Left lung (tissue), 14 donors: ENCODE measurements at regions of chr4 and their contacts with region 1.

Region 1: DNA sequence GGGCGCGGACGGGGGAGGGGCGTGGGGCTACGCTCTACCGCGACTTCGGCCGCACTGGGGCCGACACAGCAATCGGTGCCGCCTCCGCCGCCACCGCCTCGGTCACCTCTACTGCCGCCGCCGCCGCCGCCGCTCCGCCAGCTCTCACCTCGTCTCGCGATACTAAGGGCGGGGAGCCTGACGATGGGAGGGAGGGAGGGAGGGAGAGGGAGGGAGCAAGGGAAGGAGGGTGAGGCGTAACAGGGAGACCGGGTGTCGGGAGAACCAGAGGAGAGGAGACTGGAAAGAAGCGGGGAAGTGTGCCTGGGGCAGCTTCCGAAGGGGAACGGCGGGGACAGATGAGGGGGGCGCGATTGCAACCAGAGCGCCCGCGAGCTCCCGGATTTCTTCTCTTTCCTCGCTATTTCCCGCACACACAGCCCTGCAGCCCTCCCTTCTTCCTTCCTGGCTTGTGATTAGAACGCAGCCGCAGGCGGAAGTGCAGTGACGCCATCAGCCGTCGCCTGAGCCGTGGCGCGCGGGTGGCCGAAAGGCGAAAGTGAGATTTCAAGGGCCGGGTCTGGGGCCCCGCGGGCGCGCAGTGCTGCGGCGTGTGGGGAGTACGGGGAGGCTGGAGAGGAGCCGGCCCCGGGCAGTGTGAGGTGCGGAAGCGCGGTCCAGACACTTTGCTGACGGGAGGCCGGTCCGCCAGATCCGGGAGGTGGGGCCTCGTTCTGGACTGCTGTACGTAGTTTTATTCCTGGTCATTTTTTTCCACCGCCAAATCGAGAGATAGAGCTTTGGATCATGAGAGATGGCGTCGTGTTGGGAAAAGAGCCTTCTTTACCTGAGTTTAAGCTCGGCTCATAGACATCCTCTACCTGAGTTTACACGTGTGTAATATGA is at the start of gene ANKRD17:
- DNase-seq: peak; percentile 93 to 98 (median 97)
- ATAC-seq: peak; percentile 87
- H3K4me3 ChIP-seq: peak within 1 kb of the TSS; percentile 61 to 77
- H3K27ac ChIP-seq: peak within 1 kb of the TSS; percentile 98 to 99
- H3K4me1 ChIP-seq: peaks cover 17 to 55% of the 10 kb centered on the region in 2 donors
- H3K27me3 ChIP-seq: no peaks in the 10 kb centered on the region
- CTCF ChIP-seq: peak; percentile 1 to 40
- polyA plus RNA-seq, gene ANKRD17: 68.0 to 83.0 (median 76.6) TPM

Region 2: DNA sequence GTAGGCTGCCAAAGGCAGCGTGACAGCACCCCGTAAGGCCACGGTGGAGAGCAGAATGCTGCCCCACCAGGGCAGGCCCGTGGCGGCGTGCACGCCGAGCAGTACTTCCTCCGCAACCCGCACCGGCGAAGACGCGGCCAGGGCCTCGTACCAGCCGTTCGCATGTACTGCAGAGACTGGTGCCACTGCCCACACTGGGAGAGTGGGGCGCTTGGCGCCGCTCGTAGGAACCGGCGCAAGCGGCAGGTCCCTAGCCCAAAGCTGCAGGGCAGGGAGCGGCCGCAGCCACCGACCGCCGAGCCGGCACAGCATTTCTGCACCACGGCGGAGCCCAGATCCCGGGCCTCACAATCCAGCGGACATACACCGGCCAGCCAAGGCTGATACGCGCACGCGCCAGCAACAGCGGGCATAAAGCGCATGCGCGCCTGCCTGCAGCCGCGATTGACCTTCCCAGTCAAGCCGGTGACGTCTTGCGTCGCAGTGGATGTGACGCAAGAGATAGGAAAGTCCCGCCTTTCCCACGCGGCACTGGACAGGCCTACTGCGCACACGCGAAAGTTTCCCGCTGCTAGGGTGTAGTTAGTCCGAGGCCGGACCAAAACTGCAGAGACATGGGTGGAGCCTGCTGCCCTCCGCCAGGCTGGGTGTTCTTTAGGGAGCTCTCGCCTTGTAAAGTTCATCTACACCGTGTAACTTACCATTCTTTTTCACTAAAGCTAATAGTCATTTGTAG is 189.4 kb before region 1 on chr4 and contains the start of gene COX18:
- intact Hi-C with region 1: loop called in 1 of 2 experiments (anchors 5 kb)
- DNase-seq: peak; percentile 97 to 99 (median 98)
- ATAC-seq: peak; percentile 92
- H3K4me3 ChIP-seq: peak within 1 kb of the TSS; percentile 74 to 76
- H3K27ac ChIP-seq: peak within 1 kb of the TSS; percentile 95 to 98
- H3K4me1 ChIP-seq: peaks cover 0 to 24% of the 10 kb centered on the region in 2 donors
- H3K27me3 ChIP-seq: no peaks in the 10 kb centered on the region
- CTCF ChIP-seq: peak in 1 of 2 donors; percentile 14
- polyA plus RNA-seq, gene COX18: 16.0 to 19.7 (median 18.0) TPM

Region 3: DNA sequence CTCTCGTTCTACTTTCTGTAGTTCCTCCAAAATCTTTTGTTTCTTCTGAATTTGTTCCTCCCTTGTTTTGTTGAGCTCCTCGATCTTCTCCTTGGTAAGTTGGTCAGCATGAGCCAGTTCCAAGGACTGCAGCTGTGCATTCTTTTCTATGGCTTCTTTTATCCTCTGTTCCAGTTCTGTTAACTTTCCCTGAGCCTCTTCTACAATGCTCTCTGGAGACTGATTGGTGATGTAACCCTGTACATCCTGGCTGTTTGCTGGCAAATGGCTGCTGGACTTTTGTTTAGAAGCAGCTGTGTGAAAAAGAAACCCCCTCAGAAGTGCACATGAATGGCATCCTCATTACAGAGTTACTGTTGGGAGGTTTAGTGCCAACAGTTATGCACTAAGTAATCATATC is 118.9 kb before region 1 on chr4:
- intact Hi-C with region 1: loop called in 1 of 2 experiments (anchors 10 kb)
- DNase-seq: no peak
- ATAC-seq: no peak
- H3K4me3 ChIP-seq: no peak overlapping the region
- H3K27ac ChIP-seq: no peak overlapping the region
- H3K4me1 ChIP-seq: no peaks in the 10 kb centered on the region
- H3K27me3 ChIP-seq: no peaks in the 10 kb centered on the region
- CTCF ChIP-seq: no peak